ENCODE measurements at regions of chr10 and their contacts with region 1.

Region 1: GRCh38 chr10:50624866-50625692 is 1.3 kb upstream of the SGMS1 start:
- DNase-seq: peak in 3 of 4 donors; percentile 71 to 81 (median 76)
- ATAC-seq: peak; percentile 63
- H3K4me3 ChIP-seq: peak overlapping the region; percentile 42 to 96
- H3K27ac ChIP-seq: peak overlapping the region; percentile 88 to 100 (median 96)
- H3K4me1 ChIP-seq: peaks cover 26% of the 10 kb centered on the region
- H3K27me3 ChIP-seq: no peaks in the 10 kb centered on the region
- CTCF ChIP-seq: peak; percentile 25 to 76 (median 55)
- POLR2A ChIP-seq: peak; percentile 29 to 44 (median 32)

Region 2: GRCh38 chr10:50417886-50418830 is 206.9 kb before region 1 on chr10:
- intact Hi-C with region 1: loop called (anchors 10 kb)
- DNase-seq: peak; percentile 45 to 59 (median 47)
- ATAC-seq: peak; percentile 82
- H3K4me3 ChIP-seq: peak overlapping the region in 1 of 2 donors; percentile 21
- H3K27ac ChIP-seq: peak overlapping the region; percentile 55 to 81 (median 76)
- H3K4me1 ChIP-seq: peaks cover 34% of the 10 kb centered on the region
- H3K27me3 ChIP-seq: no peaks in the 10 kb centered on the region
- CTCF ChIP-seq: peak in 1 of 7 experiments; percentile 7
- POLR2A ChIP-seq: peak; percentile 31 to 61 (median 36)

Region 3: DNA sequence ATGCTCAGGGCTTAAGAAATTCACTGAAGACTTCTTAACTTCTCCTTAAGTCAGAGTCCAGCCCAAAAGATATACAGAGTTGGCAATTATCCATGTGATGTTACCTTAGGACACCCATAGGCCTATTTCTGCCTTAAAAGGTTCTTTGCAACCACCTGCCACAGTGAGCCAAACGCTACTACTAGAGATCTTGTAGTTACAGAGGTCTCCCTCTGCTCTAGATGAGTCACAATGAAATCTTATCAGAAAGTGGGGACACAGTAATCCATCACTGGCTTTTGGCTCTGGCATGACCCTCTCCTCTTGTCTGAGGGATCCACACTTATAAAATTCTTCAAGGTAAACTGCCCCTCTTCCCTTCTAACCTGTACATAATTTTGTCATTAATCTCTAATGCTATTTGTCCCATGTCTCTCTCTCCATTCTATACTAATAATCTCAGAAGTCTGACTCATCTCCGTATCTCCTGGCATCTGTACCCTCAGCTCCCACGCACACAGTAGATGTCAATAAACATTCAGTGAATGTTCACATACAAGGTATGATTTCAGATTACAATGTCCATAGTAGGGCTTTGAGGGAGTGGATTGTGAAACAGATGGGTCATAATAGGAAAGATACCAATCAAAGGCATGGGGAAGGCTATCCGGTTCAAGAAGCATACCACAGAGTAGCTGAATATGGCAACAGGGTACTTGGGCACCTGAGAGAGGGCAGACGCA is 113.4 kb before region 1 on chr10:
- intact Hi-C with region 1: no loop called
- DNase-seq: no peak
- ATAC-seq: no peak
- H3K4me3 ChIP-seq: no peak overlapping the region
- H3K27ac ChIP-seq: peak overlapping the region in 3 of 4 donors; percentile 20 to 57 (median 30)
- H3K4me1 ChIP-seq: peaks cover 68% of the 10 kb centered on the region
- H3K27me3 ChIP-seq: no peaks in the 10 kb centered on the region
- CTCF ChIP-seq: no peak
- POLR2A ChIP-seq: no peak

Region 4: DNA sequence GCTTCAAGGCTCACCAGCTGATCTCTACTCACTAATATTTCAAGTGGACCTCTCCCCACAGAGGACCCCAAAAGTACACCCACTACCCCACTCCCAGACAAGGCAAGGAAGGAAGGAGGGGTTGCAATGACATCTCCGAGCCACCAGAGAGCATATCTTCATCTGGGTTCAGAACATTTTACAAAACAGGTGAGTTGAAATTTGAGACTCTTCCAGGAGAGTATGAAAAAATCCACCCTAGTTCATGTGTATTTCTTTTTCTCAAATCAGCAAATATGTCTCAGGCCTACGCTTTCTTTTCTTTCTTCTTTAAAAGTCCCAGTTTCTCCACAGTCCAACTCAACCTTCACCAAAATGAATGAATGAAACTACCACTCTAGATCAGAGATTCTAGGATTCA is 63.3 kb before region 1 on chr10:
- intact Hi-C with region 1: loop called (anchors 5 kb)
- DNase-seq: peak in 2 of 4 donors; percentile 36 to 48
- ATAC-seq: peak; percentile 79
- H3K4me3 ChIP-seq: no peak overlapping the region
- H3K27ac ChIP-seq: peak overlapping the region; percentile 16 to 61 (median 36)
- H3K4me1 ChIP-seq: peaks cover 53% of the 10 kb centered on the region
- H3K27me3 ChIP-seq: no peaks in the 10 kb centered on the region
- CTCF ChIP-seq: peak; percentile 28 to 78 (median 65)
- POLR2A ChIP-seq: no peak

Measured in body of pancreas (tissue), 4 donors.